Dorsolateral prefrontal cortex (tissue), 120 donors: ENCODE measurements at regions of chr17 and their contacts with region 1.

Region 1: GRCh38 chr17:75896415-75897159 is at the start of gene TRIM65:
- DNase-seq: peak; percentile 64 to 90 (median 80)
- H3K4me3 ChIP-seq: peak within 1 kb of the TSS; percentile 46 to 90 (median 76)
- H3K27ac ChIP-seq: peak within 1 kb of the TSS; percentile 71 to 98 (median 93)
- H3K27me3 ChIP-seq: no peaks in the 10 kb centered on the region
- CTCF ChIP-seq: peak in 50 of 56 donors; percentile 12 to 84 (median 45)
- total RNA-seq, gene TRIM65: 11.9 to 37.4 (median 20.2) TPM

Region 2: DNA sequence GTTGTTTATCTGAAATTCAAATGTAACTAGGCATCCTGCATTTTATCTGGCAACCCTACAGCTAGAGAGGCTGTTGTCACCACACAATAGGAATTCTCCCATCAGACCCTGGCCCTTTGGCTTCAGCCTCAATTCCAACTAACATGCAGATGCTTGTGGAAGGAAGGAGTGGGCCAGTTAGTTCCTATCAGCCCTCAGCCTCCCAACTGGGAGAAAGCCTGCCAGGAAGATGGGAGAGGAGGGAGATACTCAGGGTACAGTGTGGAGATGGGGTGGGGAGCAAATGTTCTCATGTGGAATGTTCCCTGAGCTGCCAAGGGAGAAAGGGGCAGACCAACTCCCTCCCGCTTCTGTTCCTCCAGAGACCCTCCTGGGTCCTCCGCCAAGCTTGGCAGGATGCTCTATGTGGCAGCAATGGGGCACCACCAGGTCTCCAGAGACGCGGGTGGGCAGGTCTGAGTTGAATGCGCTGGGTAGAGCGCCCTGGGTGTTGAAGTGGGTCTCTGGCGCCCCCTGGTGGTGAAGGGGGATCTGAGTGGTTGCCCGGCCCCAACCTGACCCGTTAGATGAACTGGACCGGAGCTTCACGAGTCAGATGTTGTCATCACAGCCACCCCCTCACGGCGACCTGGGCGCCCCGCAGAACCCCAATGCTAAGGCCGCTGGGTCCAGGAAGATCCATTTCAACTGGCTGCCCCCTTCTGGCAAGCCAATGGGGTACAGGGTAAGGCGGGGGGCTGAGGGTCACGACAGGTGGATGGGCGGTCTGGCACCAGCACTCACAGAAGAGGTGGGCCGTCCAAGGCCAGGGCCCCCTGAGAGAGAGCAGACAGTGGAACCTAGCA is 146.8 kb before region 1 on chr17:
- intact Hi-C with region 1: no loop called
- DNase-seq: peak; percentile 83 to 94 (median 90)
- H3K4me3 ChIP-seq: peak overlapping the region in 20 of 59 donors; percentile 3 to 41 (median 24)
- H3K27ac ChIP-seq: peak overlapping the region in 45 of 59 donors; percentile 4 to 84 (median 43)
- H3K27me3 ChIP-seq: no peaks in the 10 kb centered on the region
- CTCF ChIP-seq: peak; percentile 85 to 99 (median 96)

Region 3: GRCh38 chr17:75779231-75779986 is 117.2 kb before region 1 on chr17:
- intact Hi-C with region 1: loop called in 1 of 2 experiments (anchors 10 kb)
- DNase-seq: peak; percentile 90 to 99 (median 98)
- H3K4me3 ChIP-seq: peak overlapping the region; percentile 58 to 100 (median 94)
- H3K27ac ChIP-seq: peak overlapping the region; percentile 76 to 99 (median 97)
- H3K27me3 ChIP-seq: no peaks in the 10 kb centered on the region
- CTCF ChIP-seq: peak in 16 of 56 donors; percentile 2 to 42 (median 10)

Region 4: GRCh38 chr17:75845049-75845860 is 51.3 kb before region 1 on chr17:
- intact Hi-C with region 1: loop called in 1 of 2 experiments (anchors 5 kb)
- DNase-seq: peak in 7 of 10 donors; percentile 15 to 71 (median 50)
- H3K4me3 ChIP-seq: peak overlapping the region in 3 of 59 donors; percentile 2 to 12 (median 10)
- H3K27ac ChIP-seq: peak overlapping the region in 56 of 59 donors; percentile 4 to 100 (median 68)
- H3K27me3 ChIP-seq: no peaks in the 10 kb centered on the region
- CTCF ChIP-seq: peak; percentile 26 to 75 (median 58)

Region 5: DNA sequence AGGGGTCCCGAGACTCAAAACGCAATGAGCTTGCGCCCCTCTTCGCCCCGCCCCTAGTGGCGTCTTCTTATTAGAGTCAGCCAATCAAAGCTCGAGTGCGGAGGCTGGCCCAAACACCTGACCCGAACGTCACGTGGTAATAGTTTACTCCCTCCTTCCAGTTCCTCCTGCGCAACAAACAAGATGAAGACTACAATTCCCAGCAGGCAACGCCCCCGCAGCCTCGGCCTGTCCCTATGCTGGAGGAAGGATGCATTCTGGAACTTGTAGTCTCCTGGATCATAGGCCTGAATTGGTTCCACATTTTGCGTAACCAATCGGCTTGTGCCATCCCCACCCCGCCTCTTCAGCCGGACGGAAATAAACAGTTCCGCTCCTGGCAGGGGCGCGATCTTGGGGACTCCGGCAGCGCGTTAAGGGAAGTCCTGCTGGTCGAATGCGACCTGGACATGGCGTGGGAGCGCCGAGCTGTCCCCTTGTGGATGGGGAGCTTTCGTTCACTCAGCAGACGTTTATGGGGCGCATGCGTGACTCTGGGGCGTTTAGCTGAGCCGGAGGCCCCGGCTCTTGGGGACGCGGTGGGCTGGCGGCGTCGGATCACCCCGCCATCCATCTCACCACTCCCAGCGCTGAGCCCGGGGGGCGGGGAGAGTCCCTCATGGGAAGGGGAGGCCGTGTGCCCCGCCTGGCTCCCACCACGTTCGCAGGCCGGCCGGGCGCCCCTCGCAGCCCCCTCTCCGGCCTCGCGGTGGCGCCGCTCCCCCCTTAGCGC is 41.1 kb before region 1 on chr17 and contains the start of gene WBP2:
- intact Hi-C with region 1: loop called in 1 of 2 experiments (anchors 1 kb)
- DNase-seq: peak; percentile 96 to 100 (median 99)
- H3K4me3 ChIP-seq: peak within 1 kb of the TSS; percentile 74 to 100 (median 94)
- H3K27ac ChIP-seq: peak within 1 kb of the TSS; percentile 95 to 100 (median 99)
- H3K27me3 ChIP-seq: no peaks in the 10 kb centered on the region
- CTCF ChIP-seq: peak in 48 of 56 donors; percentile 14 to 69 (median 46)
- total RNA-seq, gene WBP2: 311 to 523 (median 421) TPM

Region 6: DNA sequence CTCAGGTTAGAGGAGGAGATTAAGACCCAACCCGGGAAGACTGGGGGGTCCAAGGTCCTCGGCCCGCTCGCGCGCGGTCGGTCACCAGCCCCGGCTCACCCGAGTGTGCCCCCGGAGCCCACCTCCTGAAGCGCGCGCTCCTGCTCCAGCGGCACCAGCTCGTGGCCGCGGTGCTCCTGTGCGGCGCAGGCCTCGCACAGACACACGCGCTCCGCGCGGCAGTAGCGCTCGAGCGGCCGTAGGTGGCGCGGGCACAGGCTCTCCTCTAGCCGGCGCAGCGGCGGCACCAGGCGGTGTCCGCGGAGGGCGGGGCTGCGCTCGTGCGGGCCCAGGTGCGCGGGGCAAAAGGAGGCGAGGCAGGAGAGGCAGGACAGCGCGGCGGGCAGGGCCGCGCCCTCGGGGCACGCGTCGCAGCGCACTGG is 18.8 kb before region 1 on chr17:
- intact Hi-C with region 1: loop called in 1 of 2 experiments (anchors 2 kb)
- DNase-seq: peak in 7 of 10 donors; percentile 58 to 82 (median 71)
- H3K4me3 ChIP-seq: peak overlapping the region; percentile 49 to 82 (median 71)
- H3K27ac ChIP-seq: peak overlapping the region; percentile 62 to 99 (median 94)
- H3K27me3 ChIP-seq: no peaks in the 10 kb centered on the region
- CTCF ChIP-seq: peak in 27 of 56 donors; percentile 1 to 52 (median 26)

Region 7: GRCh38 chr17:76053246-76054116 is 156.9 kb after region 1 on chr17:
- intact Hi-C with region 1: no loop called
- DNase-seq: no peak
- H3K4me3 ChIP-seq: no peak overlapping the region
- H3K27ac ChIP-seq: no peak overlapping the region
- H3K27me3 ChIP-seq: no peaks in the 10 kb centered on the region
- CTCF ChIP-seq: no peak

Region 8: DNA sequence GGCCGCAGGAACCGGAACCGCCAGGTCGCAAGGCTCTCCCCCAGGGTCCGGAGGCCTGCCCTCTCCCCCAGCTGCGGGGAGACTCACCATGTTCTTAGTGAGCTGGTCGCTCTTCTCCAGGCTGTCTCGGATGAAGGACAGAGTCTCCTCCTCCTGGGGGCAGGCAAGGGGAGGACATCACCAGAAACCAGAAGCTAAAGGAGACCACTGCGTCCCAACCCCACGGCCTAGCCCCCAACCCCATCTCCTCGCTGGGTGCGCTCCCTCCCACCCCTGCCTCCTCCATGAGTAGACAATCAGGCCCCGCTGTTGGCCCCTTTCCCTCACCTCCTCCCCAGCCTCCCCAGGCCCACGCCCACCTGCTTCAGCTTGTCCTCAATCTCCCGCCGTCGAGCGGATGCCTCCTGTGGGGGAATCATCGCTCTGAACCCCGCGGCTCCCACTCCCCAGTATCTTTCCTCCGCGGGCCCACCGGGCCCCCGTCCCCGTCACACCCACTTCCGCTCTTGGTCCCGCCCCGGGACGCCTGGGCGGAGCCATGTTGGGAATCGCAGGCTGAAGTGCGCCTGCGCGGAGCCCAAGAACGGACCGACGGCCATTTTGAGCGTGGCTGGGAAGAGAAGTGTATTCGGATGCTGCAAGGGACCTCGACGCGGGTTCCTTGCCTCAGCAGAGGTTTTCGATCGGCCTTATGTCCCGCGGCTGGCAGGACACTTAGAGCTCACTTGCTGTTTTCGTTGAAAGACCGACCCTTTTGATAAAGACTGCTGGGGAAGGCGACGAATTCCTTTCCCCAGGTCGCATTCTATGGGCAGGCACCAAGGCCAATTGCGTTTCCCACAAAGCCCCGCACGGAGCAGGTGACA is 206.9 kb after region 1 on chr17 and contains the start of gene EXOC7:
- intact Hi-C with region 1: loop called in 1 of 2 experiments (anchors 5 kb)
- DNase-seq: peak; percentile 86 to 96 (median 91)
- H3K4me3 ChIP-seq: peak within 1 kb of the TSS; percentile 74 to 98 (median 87)
- H3K27ac ChIP-seq: peak within 1 kb of the TSS; percentile 30 to 99 (median 94)
- H3K27me3 ChIP-seq: no peaks in the 10 kb centered on the region
- CTCF ChIP-seq: peak in 24 of 56 donors; percentile 6 to 54 (median 23)
- total RNA-seq, gene EXOC7: 155 to 256 (median 195) TPM